ENCODE measurements at regions of chr3 and their contacts with region 1.

Region 1: DNA sequence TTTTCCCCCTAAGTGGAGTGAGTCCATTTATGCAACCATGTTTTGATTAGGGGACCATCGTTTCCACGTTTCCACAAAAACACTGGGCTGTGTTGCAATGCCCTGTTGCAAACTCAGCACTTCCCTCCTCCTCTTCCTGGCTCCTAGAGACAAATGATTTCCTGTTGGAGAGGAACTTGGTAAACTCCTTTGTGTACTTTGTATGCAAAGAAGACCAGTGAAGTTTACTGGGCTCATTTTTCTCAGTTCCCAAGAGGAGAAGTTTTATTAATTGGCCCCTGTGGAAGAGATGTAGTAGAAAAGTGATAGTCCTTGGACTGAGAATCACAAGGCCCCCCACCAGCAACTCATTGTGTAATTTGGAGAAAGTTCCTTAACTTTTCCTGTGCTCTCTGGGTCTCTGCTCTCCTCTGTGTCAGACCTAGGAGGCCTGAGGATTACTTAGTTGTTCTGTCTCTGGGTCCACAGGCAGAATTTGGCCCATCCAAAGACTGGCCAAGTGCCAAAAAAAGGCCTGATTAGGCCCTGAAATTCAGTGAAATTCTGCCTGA is 95.0 kb downstream of the ATG7 start:
- DNase-seq: no peak
- H3K4me3 ChIP-seq: no peak overlapping the region
- CTCF ChIP-seq: no peak

Region 2: DNA sequence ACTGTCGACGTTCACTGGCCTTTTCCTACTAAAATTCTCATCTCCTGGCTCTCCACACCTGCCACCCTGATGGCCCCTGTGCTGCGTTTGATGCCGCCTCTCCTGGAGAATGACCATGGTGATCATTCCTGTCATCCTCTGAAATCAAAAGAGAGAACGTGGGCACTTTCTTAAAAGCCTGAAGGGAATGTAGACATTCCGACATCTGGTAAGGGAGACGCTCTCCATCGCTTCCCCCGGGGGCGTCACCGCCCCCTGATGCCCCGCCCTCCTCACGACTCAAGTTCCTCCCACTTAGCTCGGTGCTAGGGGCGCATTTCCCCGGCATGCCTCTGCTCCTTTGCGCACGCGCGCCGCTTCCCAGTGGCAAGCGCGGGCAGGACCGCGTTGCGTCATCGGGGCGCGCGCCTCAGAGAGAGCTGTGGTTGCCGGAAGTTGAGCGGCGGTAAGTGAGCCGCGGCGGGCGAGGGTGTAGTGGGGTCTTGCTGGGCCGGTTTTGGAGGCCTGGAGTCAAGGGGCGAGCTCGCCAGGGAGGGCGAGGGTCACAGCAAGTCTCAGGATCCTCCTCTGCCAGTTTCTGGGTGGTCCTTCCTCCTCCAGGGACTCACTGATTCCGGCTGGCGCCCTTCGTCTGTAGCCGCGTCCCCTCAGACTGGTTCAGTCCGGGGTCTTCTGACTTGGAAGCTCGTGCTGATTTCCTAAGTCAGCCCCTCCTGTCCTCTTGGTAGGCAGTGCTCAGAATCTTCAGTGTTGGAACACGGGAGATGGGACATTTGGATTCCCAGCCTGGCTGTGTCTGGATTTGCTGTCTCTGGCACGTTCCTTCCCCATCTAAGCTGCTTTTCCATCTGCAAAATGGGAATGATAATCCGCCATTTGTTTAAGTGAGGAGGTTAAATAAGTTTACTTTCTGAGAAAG is 95.0 kb before region 1 on chr3 and contains the start of gene ATG7:
- in situ Hi-C with region 1: no loop called
- DNase-seq: peak; percentile 93
- H3K4me3 ChIP-seq: peak within 1 kb of the TSS; percentile 97
- CTCF ChIP-seq: peak; percentile 6

Region 3: GRCh38 chr3:11785024-11785377 is 417.8 kb after region 1 on chr3:
- in situ Hi-C with region 1: loop called (anchors 25 kb)
- DNase-seq: no peak
- H3K4me3 ChIP-seq: no peak overlapping the region
- CTCF ChIP-seq: no peak

Measured in astrocyte of the cerebellum (primary cell).